ENCODE measurements at regions of chr15 and their contacts with region 1.

Region 1: DNA sequence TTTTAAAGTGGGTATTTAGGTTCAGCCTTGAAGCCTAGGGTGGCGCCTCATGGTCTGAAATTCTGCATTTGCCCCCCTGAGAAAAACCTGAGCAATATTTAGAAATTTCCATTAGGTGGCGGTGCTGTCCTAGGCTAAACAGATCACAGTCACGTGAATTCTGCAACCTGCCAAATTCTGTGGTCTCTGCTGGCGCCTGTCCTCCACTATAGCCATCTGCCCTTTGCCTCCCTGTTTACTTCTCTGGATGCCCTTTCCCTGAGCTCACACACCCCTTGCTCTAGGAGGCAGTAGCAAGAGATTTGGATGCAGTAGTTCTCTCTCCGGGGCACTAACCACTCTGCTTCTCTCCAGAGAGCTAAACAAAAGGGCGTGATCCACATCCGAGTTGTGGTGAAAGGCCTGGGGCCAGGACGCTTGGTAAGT is 9.1 kb downstream of the MRPS11 start:
- DNase-seq: peak; percentile 23 to 56 (median 48)
- ATAC-seq: peak; percentile 42
- H3K4me3 ChIP-seq: no peak overlapping the region
- H3K27ac ChIP-seq: no peak overlapping the region
- H3K4me1 ChIP-seq: peaks cover 6% of the 10 kb centered on the region
- H3K27me3 ChIP-seq: no peaks in the 10 kb centered on the region
- CTCF ChIP-seq: peak in 6 of 7 experiments; percentile 24 to 55 (median 46)
- POLR2A ChIP-seq: no peak

Region 2: GRCh38 chr15:88610701-88611231 is 134.1 kb after region 1 on chr15:
- intact Hi-C with region 1: loop called (anchors 10 kb)
- DNase-seq: no peak
- ATAC-seq: no peak
- H3K4me3 ChIP-seq: no peak overlapping the region
- H3K27ac ChIP-seq: no peak overlapping the region
- H3K4me1 ChIP-seq: peaks cover 24% of the 10 kb centered on the region
- H3K27me3 ChIP-seq: peaks cover 0 to 16% of the 10 kb centered on the region in 2 donors
- CTCF ChIP-seq: no peak
- POLR2A ChIP-seq: no peak

Region 3: DNA sequence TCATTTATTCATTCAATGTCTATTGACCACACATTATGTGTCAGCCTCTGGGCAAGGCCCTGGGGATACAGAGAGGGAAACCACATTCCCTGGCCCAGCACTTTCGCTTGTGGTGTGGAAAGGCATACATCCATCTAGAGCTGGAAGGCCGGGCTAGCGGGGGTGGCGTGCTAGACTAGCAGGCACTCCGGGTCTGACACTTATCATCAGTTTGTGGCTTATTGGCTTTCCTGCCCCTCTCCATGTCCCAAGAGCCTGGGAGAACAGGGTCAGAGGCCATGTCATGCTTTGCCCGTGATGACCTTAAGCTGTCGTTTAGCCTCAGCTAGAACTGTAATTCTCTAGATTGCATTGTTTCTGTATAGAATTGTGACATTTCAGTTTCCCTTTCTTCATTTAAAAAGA is 909.3 kb after region 1 on chr15:
- intact Hi-C with region 1: no loop called
- DNase-seq: no peak
- ATAC-seq: no peak
- H3K4me3 ChIP-seq: no peak overlapping the region
- H3K27ac ChIP-seq: no peak overlapping the region
- H3K4me1 ChIP-seq: no peaks in the 10 kb centered on the region
- H3K27me3 ChIP-seq: no peaks in the 10 kb centered on the region
- CTCF ChIP-seq: no peak
- POLR2A ChIP-seq: no peak

Region 4: GRCh38 chr15:89690276-89691218 is 1213.9 kb after region 1 on chr15 and contains the starts of genes PEX11A and WDR93:
- intact Hi-C with region 1: no loop called
- DNase-seq: peak; percentile 89 to 96 (median 92)
- ATAC-seq: peak; percentile 96
- H3K4me3 ChIP-seq: peak within 1 kb of the TSS; percentile 5 to 54
- H3K27ac ChIP-seq: peak within 1 kb of the TSS; percentile 60 to 76 (median 70)
- H3K4me1 ChIP-seq: peaks cover 25% of the 10 kb centered on the region
- H3K27me3 ChIP-seq: no peaks in the 10 kb centered on the region
- CTCF ChIP-seq: no peak
- POLR2A ChIP-seq: peak; percentile 39 to 76 (median 75)
- total RNA-seq, gene PEX11A: 14.5 to 25.1 TPM
- total RNA-seq, gene WDR93: 0.66 TPM in 1 of 2 donors, not detected in the other